Ascending aorta (tissue), 2 donors: ENCODE measurements at regions of chr10 and their contacts with region 1.

Region 1: DNA sequence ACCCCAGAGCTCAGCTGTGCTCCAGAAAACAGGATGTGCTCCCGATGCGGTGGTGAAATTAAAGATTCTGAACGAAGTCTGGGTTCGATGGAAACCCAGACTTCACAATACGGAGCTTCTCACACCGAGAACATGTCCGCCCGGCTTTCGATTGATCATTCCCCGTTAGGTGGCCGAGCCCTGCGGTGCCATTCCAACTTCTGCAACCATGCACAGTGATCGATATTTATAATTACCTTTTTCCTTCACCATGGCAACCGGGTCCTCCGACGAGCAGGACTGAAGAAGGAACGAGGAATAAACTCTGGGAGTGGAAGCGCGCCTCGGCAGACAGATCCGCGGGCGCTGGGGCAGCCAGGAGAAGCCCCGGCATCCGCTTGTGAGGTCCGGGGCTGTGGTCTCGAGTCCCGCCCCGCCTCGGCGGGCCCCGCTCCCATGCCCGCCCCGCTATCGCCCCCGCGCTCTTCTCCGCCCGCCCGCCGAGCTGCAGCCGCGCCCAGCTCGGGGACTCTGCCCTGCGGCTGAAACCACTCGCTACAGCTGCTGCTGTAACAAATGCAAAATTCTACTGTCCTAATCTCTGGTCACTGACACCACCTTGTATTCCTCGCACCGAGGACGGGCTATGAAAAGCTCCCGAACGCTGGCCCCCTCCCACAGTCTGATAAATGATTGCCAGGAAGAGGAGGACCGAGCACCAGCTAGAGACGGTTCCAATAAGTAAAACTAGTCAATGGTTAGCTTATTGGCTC is 26.2 kb downstream of the ABLIM1 start:
- DNase-seq: no peak
- H3K4me3 ChIP-seq: peak overlapping the region; percentile 69 to 77
- H3K27ac ChIP-seq: peak overlapping the region; percentile 13 to 70
- H3K4me1 ChIP-seq: peaks cover 3 to 33% of the 10 kb centered on the region in 2 donors
- H3K27me3 ChIP-seq: no peaks in the 10 kb centered on the region
- CTCF ChIP-seq: no peak

Region 2: DNA sequence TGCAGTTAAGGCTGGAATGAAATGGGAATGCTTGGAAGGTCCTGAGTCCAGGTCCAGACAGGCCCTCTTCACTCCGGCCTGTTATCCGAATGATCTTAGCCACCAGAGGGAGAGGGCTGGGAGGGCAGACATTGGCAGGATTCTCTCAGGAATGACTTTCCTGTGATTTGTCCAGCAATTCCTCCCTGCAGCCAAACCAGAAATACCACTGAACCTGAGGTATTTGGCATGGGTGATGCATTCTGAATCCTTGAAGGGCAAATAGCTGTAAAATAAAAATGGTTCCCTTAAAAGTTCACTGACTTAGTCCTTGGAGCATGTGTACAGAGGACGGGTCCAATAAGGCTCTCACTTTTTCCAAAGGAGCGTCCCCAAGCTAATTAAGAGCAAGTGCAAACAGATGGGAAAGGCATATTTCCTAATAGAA is 1156.4 kb before region 1 on chr10:
- intact Hi-C with region 1: loop called (anchors 10 kb)
- DNase-seq: peak in 1 of 2 donors; percentile 82
- H3K4me3 ChIP-seq: peak overlapping the region in 1 of 2 donors; percentile 32
- H3K27ac ChIP-seq: peak overlapping the region; percentile 76 to 77
- H3K4me1 ChIP-seq: peaks cover 23 to 39% of the 10 kb centered on the region in 2 donors
- H3K27me3 ChIP-seq: no peaks in the 10 kb centered on the region
- CTCF ChIP-seq: peak in 2 of 3 experiments; percentile 7 to 43

Region 3: DNA sequence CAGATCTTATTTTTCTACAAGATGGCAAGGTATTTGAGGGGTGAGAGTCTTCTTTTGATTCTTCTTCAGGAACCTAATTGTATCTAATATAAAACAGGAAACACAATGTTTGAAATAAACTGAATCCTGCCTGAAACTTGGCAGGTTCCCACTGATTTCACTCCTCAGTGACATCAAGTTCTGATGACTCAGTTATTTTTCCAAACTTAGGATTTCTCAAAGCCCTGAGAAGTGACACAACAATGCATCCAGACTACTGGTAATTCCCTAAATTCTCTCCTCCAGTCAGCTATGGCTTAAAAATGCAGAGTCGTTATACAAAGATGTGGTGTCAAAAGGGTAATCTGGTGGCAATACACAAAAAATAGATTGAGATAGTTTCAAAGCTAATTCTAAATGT is 54.7 kb before region 1 on chr10:
- intact Hi-C with region 1: loop called (anchors 5 kb)
- DNase-seq: no peak
- H3K4me3 ChIP-seq: no peak overlapping the region
- H3K27ac ChIP-seq: peak overlapping the region; percentile 45 to 52
- H3K4me1 ChIP-seq: peaks cover 0 to 16% of the 10 kb centered on the region in 2 donors
- H3K27me3 ChIP-seq: no peaks in the 10 kb centered on the region
- CTCF ChIP-seq: no peak

Region 4: DNA sequence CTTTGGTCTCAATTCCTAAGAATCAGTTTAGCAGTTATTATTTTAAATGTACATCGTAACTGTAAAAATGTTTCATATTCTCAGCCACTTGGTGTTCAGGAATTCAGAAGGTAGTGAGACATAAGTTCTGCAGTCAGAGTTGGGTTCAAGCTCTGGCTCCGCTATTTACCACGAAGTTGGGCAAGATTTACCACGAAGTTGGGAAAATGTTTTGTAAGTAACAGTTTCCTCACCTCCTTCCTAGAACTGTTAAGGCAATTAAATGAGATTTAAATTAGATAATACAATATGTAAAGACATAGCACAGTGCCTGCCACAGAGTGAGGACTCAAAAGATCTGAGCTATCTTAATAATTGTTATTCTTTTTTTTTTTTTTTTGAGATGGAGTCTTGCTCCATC is 42.5 kb after region 1 on chr10:
- intact Hi-C with region 1: no loop called
- DNase-seq: no peak
- H3K4me3 ChIP-seq: no peak overlapping the region
- H3K27ac ChIP-seq: no peak overlapping the region
- H3K4me1 ChIP-seq: no peaks in the 10 kb centered on the region
- H3K27me3 ChIP-seq: no peaks in the 10 kb centered on the region
- CTCF ChIP-seq: no peak

Region 5: GRCh38 chr10:114810926-114811325 is 179.1 kb after region 1 on chr10:
- intact Hi-C with region 1: no loop called
- DNase-seq: no peak
- H3K4me3 ChIP-seq: no peak overlapping the region
- H3K27ac ChIP-seq: no peak overlapping the region
- H3K4me1 ChIP-seq: no peaks in the 10 kb centered on the region
- H3K27me3 ChIP-seq: no peaks in the 10 kb centered on the region
- CTCF ChIP-seq: no peak

Region 6: DNA sequence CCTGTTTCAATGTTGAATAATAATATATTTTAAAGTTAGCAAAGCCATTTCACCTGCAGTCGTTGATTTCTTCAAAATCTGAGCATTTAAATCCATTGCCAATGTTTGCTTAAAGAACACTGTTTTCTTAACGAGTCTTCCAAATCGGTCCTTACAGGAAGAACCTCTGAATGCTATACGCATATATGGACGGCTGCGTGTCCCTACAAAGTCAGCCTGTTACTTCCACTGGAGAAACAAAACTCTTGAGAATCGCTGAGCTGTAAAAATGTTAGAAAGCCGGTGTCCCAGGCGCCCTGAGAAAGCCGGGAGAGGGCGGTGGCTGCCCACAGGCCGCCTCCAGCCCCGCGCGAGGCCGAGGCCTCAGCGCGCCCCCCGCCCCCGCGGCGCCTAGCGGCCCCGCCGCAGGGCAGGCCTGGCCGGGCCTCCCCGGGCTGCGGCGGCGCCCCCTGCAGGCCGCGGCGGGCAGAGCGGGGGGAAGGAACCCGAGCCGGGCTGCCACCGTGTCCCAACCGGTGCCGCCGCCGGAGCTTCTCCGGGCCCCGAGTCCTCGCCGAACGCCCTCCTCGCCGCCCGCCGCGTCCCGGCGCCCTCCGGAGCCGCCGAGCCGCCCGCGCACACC is 189.6 kb after region 1 on chr10 and contains the start of gene FHIP2A:
- intact Hi-C with region 1: loop called (anchors 5 kb)
- DNase-seq: peak; percentile 43 to 87
- H3K4me3 ChIP-seq: peak within 1 kb of the TSS; percentile 99
- H3K27ac ChIP-seq: peak within 1 kb of the TSS; percentile 94 to 100
- H3K4me1 ChIP-seq: peaks cover 3 to 17% of the 10 kb centered on the region in 2 donors
- H3K27me3 ChIP-seq: no peaks in the 10 kb centered on the region
- CTCF ChIP-seq: peak; percentile 14 to 88 (median 35)
- total RNA-seq, gene FHIP2A: 19.6 TPM

Region 7: DNA sequence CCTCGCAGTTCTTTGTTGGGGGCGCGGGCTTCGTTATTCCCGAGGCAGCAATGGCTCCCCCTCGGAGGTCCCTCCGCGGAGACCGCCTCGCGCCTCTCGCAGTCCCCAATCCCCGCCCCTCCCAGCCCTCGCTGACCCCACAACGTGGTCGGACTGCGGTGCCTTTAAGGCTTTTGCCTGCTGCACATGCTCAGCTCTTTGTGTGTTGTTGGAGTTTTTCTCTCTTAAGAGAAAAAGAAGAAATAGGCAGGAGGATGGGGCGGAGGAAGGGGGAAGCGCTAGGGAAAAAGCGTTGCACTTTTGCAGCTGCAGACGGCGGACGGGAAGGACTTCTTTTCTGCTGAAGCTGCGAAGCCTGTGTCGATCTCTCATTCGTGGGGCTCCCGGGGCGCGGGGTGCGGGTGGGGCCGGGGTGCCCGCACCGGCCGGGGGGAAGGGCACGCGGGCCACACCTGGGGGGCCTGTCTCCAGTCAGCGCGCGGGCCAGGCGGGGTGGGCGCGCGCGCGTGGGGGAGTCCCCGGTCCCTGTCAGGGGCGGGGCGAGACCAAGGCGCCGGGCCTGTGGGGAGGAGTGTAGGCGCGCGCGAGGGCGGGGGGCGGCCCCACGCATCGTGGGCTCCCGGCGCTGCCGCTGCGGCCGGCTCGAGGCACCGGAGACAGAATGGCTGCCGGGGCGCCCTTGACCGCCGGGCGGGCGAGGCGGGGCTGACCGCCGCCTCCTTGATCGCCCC is 460.9 kb after region 1 on chr10:
- intact Hi-C with region 1: loop called (anchors 2 kb)
- DNase-seq: no peak
- H3K4me3 ChIP-seq: peak overlapping the region; percentile 80 to 92
- H3K27ac ChIP-seq: peak overlapping the region; percentile 52 to 94
- H3K4me1 ChIP-seq: peaks cover 0 to 4% of the 10 kb centered on the region in 2 donors
- H3K27me3 ChIP-seq: no peaks in the 10 kb centered on the region
- CTCF ChIP-seq: no peak